A549 (cell line): ENCODE measurements at regions of chr2 and their contacts with region 1.

Region 1: DNA sequence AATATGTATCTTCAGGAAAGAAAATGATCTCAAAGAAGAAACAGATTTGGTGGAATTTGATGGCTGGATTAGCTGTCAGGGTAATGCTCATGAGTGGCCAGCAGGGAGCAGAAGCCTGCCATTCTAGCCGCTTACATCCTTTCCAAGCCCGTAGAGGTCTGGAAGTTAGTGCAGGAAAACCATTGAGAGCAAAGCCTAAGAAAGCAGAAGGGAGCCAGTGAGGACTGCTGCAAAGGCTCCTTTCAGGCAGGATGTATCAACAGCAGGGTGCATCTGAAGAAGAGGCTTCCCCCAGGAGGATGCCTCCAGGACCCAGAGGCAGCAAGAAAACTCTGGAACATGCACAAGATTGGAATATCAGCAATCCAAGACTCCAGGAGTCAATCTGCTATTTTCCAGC is 22.9 kb upstream of the LBH start:
- DNase-seq: peak; percentile 44 to 84
- ATAC-seq: peak; percentile 91 to 97
- H3K4me3 ChIP-seq: no peak overlapping the region
- H3K27ac ChIP-seq: peak overlapping the region; percentile 35 to 67; a peak in 4 of 6 replicates
- H3K4me1 ChIP-seq: peaks cover 5% of the 10 kb centered on the region; the same call in 2 of the 3 replicates
- CTCF ChIP-seq: peak; percentile 98
- EP300 ChIP-seq: no peak
- POLR2A ChIP-seq: no peak
- RAD21 ChIP-seq: peak; percentile 99 to 100

Region 2: GRCh38 chr2:28544919-28545589 is 1663.4 kb before region 1 on chr2:
- CTCF ChIA-PET with region 1: no interaction called
- POLR2A ChIA-PET with region 1: no interaction called
- DNase-seq: no peak
- ATAC-seq: no peak; a peak in 1 of 6 replicates
- H3K4me3 ChIP-seq: no peak overlapping the region
- H3K27ac ChIP-seq: no peak overlapping the region
- H3K4me1 ChIP-seq: no peaks in the 10 kb centered on the region
- CTCF ChIP-seq: no peak
- EP300 ChIP-seq: no peak
- POLR2A ChIP-seq: no peak
- RAD21 ChIP-seq: no peak

Region 3: DNA sequence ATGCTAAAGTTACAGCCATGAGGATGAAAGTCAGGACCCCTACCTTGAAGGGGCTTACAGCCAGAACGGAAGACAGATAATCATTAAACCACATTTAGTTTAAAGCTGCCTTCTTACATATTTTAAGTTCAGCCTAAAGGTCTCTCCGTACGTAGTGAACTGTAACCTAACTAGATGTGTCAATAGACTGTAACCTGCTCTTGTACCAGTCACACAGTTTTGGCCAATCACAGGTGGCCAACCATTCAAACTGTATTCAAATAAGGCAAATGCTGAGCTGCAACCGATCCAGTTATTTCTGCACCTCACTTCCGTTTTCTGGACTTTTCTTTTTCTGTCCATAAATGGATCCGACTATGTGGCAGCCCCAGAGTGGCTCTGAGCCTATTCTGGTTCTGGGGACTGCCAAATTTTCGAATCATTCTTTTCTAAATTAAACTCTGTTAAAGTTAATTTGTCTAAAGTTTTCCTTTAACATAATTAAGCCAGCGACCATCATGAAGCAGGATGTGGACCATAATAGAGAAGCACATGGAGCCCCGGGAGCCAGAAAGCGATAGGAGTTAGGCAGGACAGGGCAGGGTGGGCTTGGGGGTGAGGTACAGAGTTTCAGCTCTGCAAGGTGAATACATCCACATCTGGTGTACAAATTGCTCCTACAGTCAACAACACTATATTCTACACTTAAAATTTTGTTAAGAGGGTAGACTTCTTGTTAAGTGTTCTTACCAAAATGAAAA is 110.0 kb before region 1 on chr2:
- CTCF ChIA-PET with region 1: no interaction called
- POLR2A ChIA-PET with region 1: no interaction called
- DNase-seq: no peak
- ATAC-seq: peak in 1 of 2 experiments; percentile 42; a peak in 1 of 6 replicates
- H3K4me3 ChIP-seq: no peak overlapping the region
- H3K27ac ChIP-seq: no peak overlapping the region
- H3K4me1 ChIP-seq: no peaks in the 10 kb centered on the region
- CTCF ChIP-seq: no peak
- EP300 ChIP-seq: no peak
- POLR2A ChIP-seq: no peak
- RAD21 ChIP-seq: no peak

Region 4: GRCh38 chr2:30155889-30156658 is 52.4 kb before region 1 on chr2:
- CTCF ChIA-PET with region 1: interaction called, 11 read pairs
- POLR2A ChIA-PET with region 1: no interaction called
- DNase-seq: no peak
- ATAC-seq: peak in 1 of 2 experiments; percentile 35; a peak in 3 of 6 replicates
- H3K4me3 ChIP-seq: no peak overlapping the region
- H3K27ac ChIP-seq: no peak overlapping the region
- H3K4me1 ChIP-seq: peaks cover 16% of the 10 kb centered on the region
- CTCF ChIP-seq: no peak
- EP300 ChIP-seq: no peak
- POLR2A ChIP-seq: no peak
- RAD21 ChIP-seq: no peak

Region 5: DNA sequence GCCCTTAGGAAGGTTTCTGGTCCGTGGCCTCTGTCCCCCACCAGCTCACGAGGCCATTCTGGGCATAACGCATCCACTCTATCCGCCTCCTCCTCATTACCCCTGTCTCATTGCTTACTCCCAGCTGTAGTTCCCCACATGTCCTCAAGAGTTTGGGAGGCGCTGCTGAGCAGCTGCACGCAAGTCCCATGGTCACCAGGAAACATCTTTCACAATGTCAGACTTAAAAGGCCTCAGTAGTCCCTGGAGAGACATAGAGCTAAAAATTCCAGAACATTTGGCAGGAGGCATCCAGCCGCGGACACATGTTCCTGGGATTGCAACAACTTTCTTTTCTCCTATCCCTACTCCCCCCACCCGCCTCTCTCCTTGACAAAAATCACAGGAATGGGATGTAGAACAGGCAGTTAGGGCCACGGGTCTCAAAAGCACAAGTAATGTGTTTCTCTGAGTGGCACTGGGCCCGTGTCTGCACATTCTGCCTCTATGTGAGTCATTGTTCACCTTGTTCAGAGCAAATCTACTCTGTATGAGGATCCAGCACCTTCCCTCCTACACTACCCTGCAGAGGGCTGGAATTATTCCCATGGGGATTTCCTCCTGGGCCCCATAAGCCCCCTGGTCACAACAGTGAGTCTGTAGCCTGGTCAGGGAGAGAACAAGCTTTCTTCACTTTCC is 31.0 kb after region 1 on chr2:
- CTCF ChIA-PET with region 1: interaction called, 16 read pairs
- POLR2A ChIA-PET with region 1: no interaction called
- DNase-seq: peak; percentile 87 to 89
- ATAC-seq: peak; percentile 70 to 79
- H3K4me3 ChIP-seq: no peak overlapping the region
- H3K27ac ChIP-seq: peak overlapping the region; percentile 24 to 92; a peak in 4 of 6 replicates
- H3K4me1 ChIP-seq: peaks cover 99% of the 10 kb centered on the region
- CTCF ChIP-seq: peak; percentile 83
- EP300 ChIP-seq: no peak
- POLR2A ChIP-seq: no peak
- RAD21 ChIP-seq: peak; percentile 68 to 76

Region 6: DNA sequence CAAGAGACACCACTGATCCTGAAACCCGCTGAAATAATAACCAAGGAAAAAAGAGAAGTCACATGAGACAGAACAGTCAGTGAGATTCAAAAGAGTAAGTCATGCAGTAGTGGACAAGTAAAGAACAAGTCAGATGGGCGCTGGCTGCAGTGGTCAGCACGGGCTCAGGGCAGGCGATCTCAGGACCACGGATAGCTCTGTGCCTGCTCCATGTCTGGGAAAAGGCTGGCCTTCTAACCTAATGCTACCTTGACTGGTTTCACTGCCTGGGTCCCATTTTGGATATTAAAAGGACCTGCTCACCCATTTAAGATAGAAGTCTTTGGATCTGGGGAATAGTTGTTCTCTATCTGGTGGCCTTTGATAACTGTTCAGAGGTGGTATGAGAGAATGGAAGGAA is 176.9 kb after region 1 on chr2:
- CTCF ChIA-PET with region 1: interaction called, 13 read pairs
- POLR2A ChIA-PET with region 1: no interaction called
- DNase-seq: peak in 1 of 2 experiments; percentile 36
- ATAC-seq: peak; percentile 91 to 92
- H3K4me3 ChIP-seq: no peak overlapping the region
- H3K27ac ChIP-seq: no peak overlapping the region
- H3K4me1 ChIP-seq: no peaks in the 10 kb centered on the region
- CTCF ChIP-seq: no peak
- EP300 ChIP-seq: no peak
- POLR2A ChIP-seq: no peak
- RAD21 ChIP-seq: no peak

Region 7: DNA sequence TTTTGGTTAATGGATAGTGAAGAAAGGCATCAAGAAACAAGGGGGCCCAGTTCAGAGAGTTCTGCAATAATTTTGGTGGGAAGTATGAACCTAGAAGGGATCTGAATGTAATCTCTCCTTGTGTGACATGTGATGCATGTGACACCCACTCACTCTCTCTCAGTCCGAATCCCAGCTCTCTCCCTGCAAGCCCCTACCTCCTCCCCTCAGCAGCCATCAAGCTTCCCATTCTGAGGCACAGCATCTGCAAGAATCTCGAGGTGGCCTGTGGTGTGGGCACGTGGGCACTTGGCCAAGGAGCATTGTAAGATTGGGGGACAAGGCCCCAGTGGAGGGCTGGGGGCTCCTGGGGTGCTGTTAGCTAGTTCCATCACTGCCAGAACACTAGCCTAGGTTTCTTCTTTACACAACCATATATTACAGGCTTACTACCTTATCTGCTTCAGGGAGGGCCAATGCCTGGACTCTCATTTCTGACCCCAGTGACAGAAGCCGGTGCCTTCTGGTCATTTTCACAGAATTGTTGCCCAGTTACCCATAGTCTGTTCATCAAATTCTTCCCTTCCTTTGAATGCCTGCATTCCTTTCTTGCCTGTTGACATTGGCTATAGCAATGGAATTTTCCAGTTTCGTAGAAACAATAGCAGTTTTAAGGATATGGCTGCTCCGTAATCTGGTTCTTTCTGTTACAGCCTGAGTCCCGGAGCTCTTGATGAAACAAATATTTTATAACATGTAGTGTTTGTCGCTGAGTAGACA is 225.3 kb after region 1 on chr2:
- CTCF ChIA-PET with region 1: no interaction called
- POLR2A ChIA-PET with region 1: no interaction called
- DNase-seq: no peak
- ATAC-seq: no peak
- H3K4me3 ChIP-seq: no peak overlapping the region
- H3K27ac ChIP-seq: no peak overlapping the region
- H3K4me1 ChIP-seq: 0 out of 3 replicates have a peak, but pooled peaks cover 4% of the 10 kb centered on the region
- CTCF ChIP-seq: no peak
- EP300 ChIP-seq: no peak
- POLR2A ChIP-seq: no peak
- RAD21 ChIP-seq: no peak

Region 8: GRCh38 chr2:30511122-30512083 is 303.0 kb after region 1 on chr2:
- CTCF ChIA-PET with region 1: interaction called, 13 read pairs
- POLR2A ChIA-PET with region 1: no interaction called
- DNase-seq: peak in 1 of 2 experiments; percentile 67
- ATAC-seq: peak; percentile 79 to 91
- H3K4me3 ChIP-seq: no peak overlapping the region
- H3K27ac ChIP-seq: peak overlapping the region; percentile 29 to 68; a peak in 5 of 6 replicates
- H3K4me1 ChIP-seq: peaks cover 60% of the 10 kb centered on the region
- CTCF ChIP-seq: no peak
- EP300 ChIP-seq: peak; percentile 24 to 46; a peak in 3 of 5 replicates
- POLR2A ChIP-seq: no peak
- RAD21 ChIP-seq: no peak; a peak in 2 of 5 replicates

Region 9: DNA sequence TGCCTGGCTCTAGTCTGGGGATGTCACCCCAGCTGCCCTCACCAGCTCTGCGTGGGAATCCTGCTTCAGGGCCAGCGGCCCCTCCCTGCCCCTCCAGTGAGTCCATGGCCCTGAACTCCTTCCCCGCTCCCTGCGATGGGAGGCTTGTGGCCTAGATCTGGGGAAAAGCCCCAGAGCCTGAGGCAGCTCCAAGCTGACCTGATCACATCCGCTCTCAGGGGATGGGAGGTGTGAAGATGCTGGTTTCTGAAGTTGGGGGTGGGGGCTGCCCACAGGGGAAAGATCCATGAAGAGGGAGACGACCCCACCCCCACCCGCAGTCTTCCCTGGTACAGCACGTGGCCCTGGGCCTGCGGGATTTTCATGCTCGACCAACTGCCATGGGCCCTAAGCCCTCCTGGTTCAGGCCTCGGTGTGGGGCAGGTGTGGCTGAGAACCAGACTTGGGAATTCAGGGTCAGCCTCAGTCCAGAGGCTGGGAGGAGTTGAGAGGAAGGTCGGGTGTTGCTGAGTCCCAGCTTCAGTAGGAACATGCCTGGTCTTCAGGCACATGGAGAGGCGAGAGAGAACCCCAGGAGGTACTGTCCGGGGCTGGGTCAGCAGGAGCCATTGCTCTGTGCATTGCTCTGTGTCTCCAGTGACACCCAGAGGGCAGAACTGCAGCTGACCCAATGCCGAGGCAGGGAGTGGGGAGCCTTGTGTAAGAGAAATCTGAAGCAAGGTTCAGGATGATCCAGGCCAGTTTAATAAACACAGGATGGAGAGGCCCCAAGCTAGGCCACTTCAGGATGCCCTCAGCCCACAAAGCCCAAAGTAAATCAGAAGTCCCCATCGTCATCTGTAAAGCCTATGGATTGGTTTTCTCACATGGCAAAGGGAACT is 483.7 kb after region 1 on chr2:
- CTCF ChIA-PET with region 1: interaction called, 31 read pairs
- POLR2A ChIA-PET with region 1: no interaction called
- DNase-seq: peak in 1 of 2 experiments; percentile 45
- ATAC-seq: peak; percentile 75 to 84
- H3K4me3 ChIP-seq: no peak overlapping the region
- H3K27ac ChIP-seq: peak overlapping the region in 1 of 2 experiments; percentile 23; a peak in 1 of 6 replicates
- H3K4me1 ChIP-seq: no peaks in the 10 kb centered on the region
- CTCF ChIP-seq: peak; percentile 37
- EP300 ChIP-seq: no peak
- POLR2A ChIP-seq: no peak
- RAD21 ChIP-seq: peak; percentile 59 to 64